CD4-positive, alpha-beta memory T cell (primary cell): ENCODE measurements at regions of chr21 and their contacts with region 1.

Region 1: DNA sequence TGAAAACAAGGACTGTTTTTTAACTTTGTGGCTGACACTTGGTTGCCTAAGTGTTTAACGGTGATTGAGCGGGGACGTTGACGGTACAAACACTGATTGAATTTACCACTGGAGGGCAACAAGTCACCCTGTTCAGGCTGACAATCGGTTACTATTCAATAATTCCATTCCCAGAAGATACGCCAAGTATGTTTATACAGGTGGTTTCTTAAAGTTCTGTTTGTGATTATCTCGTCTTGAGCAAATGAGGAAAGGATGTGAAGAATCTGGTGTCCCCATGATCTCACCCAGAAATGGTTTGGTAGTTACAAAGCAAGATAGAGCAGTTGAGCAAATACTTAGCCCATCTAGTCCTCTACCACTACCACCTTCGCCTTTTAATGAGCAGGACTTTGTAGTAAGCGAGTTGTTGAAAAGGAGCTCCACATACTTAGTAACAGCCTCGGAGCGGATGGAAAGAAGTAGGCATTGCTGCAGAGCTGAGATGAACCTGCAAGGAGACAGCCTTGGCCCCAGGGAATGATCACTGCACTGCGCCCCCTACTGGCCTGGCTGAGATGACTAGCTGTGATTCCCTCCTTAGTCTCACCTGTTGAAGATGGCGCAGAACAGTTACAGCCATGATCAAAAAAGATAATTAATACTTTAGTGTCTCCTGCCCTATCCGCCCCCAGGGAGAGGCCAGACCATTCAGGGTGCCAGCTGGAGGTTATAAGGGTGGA is 36.3 kb downstream of the IFNAR1 start:
- DNase-seq: peak; percentile 82 to 87 (median 83)
- H3K4me3 ChIP-seq: peak overlapping the region; percentile 47 to 58
- H3K4me3 Mint-ChIP-seq: peak overlapping the region; percentile 83 to 97 (median 91)
- H3K27ac ChIP-seq: peak overlapping the region; percentile 47
- H3K27ac Mint-ChIP-seq: peak overlapping the region; percentile 87 to 99 (median 94)
- H3K4me1 ChIP-seq: peaks cover 21% of the 10 kb centered on the region
- H3K4me1 Mint-ChIP-seq: peaks cover 13 to 22% (median 18%) of the 10 kb centered on the region in 4 donors
- H3K27me3 ChIP-seq: no peaks in the 10 kb centered on the region
- H3K27me3 Mint-ChIP-seq: peaks cover 0 to under 1% of the 10 kb centered on the region in 2 donors

Region 2: GRCh38 chr21:33199516-33200217 is 161.4 kb before region 1 on chr21:
- CTCF ChIA-PET with region 1: interaction called, 41 read pairs
- POLR2A ChIA-PET with region 1: interaction called, 25 read pairs
- intact Hi-C with region 1: loop called (anchors 1 kb)
- DNase-seq: peak; percentile 80 to 92 (median 84)
- H3K4me3 ChIP-seq: no peak overlapping the region
- H3K4me3 Mint-ChIP-seq: no peak overlapping the region
- H3K27ac ChIP-seq: no peak overlapping the region
- H3K27ac Mint-ChIP-seq: peak overlapping the region in 6 of 7 donors; percentile 65 to 88 (median 80)
- H3K4me1 ChIP-seq: peaks cover 18% of the 10 kb centered on the region
- H3K4me1 Mint-ChIP-seq: peaks cover 22 to 43% (median 32%) of the 10 kb centered on the region in 4 donors
- H3K27me3 ChIP-seq: no peaks in the 10 kb centered on the region
- H3K27me3 Mint-ChIP-seq: peaks cover 2 to 3% of the 10 kb centered on the region in 2 donors

Region 3: DNA sequence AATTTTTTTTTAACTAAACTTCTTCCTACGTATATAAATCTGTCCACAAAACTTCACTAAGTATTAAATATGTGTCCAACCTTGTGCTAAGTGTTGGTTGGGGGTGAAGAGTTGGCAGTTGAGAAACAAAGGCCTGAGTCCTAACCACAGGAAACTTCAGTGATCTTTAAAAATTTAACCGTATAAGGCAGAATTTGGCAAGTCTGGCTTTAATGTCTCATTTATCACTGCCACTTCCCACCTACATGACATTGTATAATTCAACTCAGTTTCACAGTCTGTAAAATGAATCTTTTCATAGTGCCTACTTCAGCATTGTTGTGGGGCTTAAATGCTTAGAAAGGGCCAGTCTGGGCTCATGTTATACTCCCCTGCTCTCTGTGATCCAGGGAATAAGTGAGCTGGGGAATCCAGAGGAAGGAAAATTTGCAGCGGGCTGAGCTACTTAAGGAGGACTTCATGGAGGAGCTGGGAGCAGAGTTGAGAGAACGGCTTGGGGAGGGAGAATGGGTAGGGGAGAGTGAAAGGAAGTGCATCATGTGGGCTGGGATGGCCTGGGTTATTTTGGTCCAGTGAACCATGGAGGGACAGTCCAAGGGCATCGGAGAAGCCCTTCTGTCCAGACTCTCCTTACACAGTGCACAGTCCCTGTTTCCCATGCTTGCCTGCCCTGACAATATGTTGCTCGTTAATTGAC is 116.8 kb before region 1 on chr21:
- CTCF ChIA-PET with region 1: interaction called, 25 read pairs
- POLR2A ChIA-PET with region 1: interaction called, 14 read pairs
- intact Hi-C with region 1: no loop called
- DNase-seq: no peak
- H3K4me3 ChIP-seq: peak overlapping the region in 1 of 2 donors; percentile 10
- H3K4me3 Mint-ChIP-seq: peak overlapping the region; percentile 31 to 89 (median 78)
- H3K27ac ChIP-seq: peak overlapping the region; percentile 16
- H3K27ac Mint-ChIP-seq: peak overlapping the region; percentile 87 to 96 (median 94)
- H3K4me1 ChIP-seq: peaks cover 94% of the 10 kb centered on the region
- H3K4me1 Mint-ChIP-seq: peaks cover 63 to 90% (median 76%) of the 10 kb centered on the region in 4 donors
- H3K27me3 ChIP-seq: no peaks in the 10 kb centered on the region
- H3K27me3 Mint-ChIP-seq: no peaks in the 10 kb centered on the region

Region 4: DNA sequence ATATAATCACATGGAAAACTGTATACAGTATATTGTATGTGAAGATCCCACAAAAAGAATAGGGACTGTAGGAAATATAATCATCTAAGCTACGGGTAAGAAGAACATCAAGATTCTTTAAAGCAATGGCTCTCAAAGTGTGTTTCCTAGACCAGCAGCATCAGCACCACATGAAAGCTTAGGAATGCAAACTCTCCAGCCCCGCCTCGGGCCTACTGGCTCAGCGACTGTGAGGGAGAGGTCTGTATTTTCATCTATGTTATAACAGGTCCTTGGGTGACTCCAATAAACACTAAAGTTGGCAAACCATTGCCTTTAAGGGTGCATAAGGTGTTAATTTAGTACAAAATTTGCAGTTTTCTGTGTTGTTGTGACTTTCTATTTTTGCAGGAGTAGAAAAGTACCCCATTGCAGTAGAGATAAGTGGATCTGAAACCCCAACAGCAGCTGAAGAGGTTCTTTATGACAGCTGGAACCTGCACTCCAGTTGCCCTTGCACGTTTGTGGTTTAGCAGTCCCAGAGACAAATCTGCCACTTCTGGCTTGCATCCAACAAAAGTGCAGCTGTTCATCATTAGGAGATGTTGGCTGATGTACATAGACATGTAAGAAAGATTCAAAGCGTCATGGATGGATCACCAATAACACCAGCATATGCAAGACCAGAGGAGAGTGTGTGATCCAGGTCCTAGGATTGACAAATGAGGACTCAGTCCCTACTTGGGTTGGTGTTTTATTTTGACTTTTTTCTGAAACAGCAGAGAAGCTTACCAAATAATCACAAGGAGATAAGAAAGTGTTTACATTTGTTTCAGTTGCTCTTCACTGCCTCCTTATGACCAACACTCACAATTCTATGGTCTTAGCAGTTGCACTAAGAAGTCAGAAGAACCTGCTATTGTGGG is 52.2 kb before region 1 on chr21:
- CTCF ChIA-PET with region 1: interaction called, 13 read pairs
- POLR2A ChIA-PET with region 1: interaction called, 6 read pairs
- intact Hi-C with region 1: no loop called
- DNase-seq: peak in 4 of 5 donors; percentile 36 to 49 (median 44)
- H3K4me3 ChIP-seq: no peak overlapping the region
- H3K4me3 Mint-ChIP-seq: peak overlapping the region in 2 of 8 donors; percentile 19 to 40
- H3K27ac ChIP-seq: no peak overlapping the region
- H3K27ac Mint-ChIP-seq: peak overlapping the region in 4 of 7 donors; percentile 0 to 17 (median 4)
- H3K4me1 ChIP-seq: peaks cover 12% of the 10 kb centered on the region
- H3K4me1 Mint-ChIP-seq: peaks cover 9 to 38% (median 22%) of the 10 kb centered on the region in 4 donors
- H3K27me3 ChIP-seq: no peaks in the 10 kb centered on the region
- H3K27me3 Mint-ChIP-seq: no peaks in the 10 kb centered on the region

Region 5: DNA sequence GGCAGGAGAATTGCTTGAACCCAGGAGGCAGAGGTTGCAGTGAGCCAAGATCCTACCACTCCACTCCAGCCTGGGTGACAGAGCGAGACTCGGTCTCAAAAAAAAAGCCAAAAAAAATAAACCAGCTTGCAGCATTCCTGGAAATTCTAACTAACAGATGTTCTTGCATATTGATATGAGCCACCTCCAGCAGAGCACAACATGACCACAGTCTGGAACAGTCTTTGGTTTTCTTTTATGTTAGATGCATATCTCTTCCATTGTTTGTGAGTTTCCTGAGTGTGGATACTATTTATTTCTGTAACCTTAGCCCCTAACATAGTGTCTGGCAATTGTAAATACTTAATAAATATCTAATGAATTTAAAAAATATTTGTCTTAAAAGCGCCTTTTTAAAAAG is 12.3 kb before region 1 on chr21:
- CTCF ChIA-PET with region 1: interaction called, 90 read pairs
- POLR2A ChIA-PET with region 1: interaction called, 12 read pairs
- intact Hi-C with region 1: no loop called
- DNase-seq: no peak
- H3K4me3 ChIP-seq: no peak overlapping the region
- H3K4me3 Mint-ChIP-seq: no peak overlapping the region
- H3K27ac ChIP-seq: no peak overlapping the region
- H3K27ac Mint-ChIP-seq: peak overlapping the region in 1 of 7 donors; percentile 52
- H3K4me1 ChIP-seq: peaks cover 15% of the 10 kb centered on the region
- H3K4me1 Mint-ChIP-seq: peaks cover 8 to 24% (median 14%) of the 10 kb centered on the region in 4 donors
- H3K27me3 ChIP-seq: no peaks in the 10 kb centered on the region
- H3K27me3 Mint-ChIP-seq: no peaks in the 10 kb centered on the region

Region 6: GRCh38 chr21:33394260-33394659 is 33.2 kb after region 1 on chr21:
- CTCF ChIA-PET with region 1: interaction called, 13 read pairs
- POLR2A ChIA-PET with region 1: no interaction called
- intact Hi-C with region 1: no loop called
- DNase-seq: no peak
- H3K4me3 ChIP-seq: no peak overlapping the region
- H3K4me3 Mint-ChIP-seq: no peak overlapping the region
- H3K27ac ChIP-seq: no peak overlapping the region
- H3K27ac Mint-ChIP-seq: no peak overlapping the region
- H3K4me1 ChIP-seq: no peaks in the 10 kb centered on the region
- H3K4me1 Mint-ChIP-seq: peaks cover 0 to 2% (median 0%) of the 10 kb centered on the region in 4 donors
- H3K27me3 ChIP-seq: no peaks in the 10 kb centered on the region
- H3K27me3 Mint-ChIP-seq: peaks cover 3 to 4% of the 10 kb centered on the region in 2 donors

Region 7: GRCh38 chr21:33449616-33450015 is 88.6 kb after region 1 on chr21:
- CTCF ChIA-PET with region 1: interaction called, 75 read pairs
- POLR2A ChIA-PET with region 1: interaction called, 26 read pairs
- intact Hi-C with region 1: loop called (anchors 1 kb)
- DNase-seq: no peak
- H3K4me3 ChIP-seq: no peak overlapping the region
- H3K4me3 Mint-ChIP-seq: no peak overlapping the region
- H3K27ac ChIP-seq: no peak overlapping the region
- H3K27ac Mint-ChIP-seq: no peak overlapping the region
- H3K4me1 ChIP-seq: no peaks in the 10 kb centered on the region
- H3K4me1 Mint-ChIP-seq: peaks cover 3 to 5% (median 4%) of the 10 kb centered on the region in 4 donors
- H3K27me3 ChIP-seq: no peaks in the 10 kb centered on the region
- H3K27me3 Mint-ChIP-seq: no peaks in the 10 kb centered on the region